ENCODE measurements at regions of chr14 and their contacts with region 1.

Region 1: GRCh38 chr14:50860478-50861086 is 11.3 kb upstream of the ABHD12B start:
- DNase-seq: peak; percentile 72 to 93 (median 87)
- ATAC-seq: peak; percentile 68 to 80 (median 78)
- H3K4me3 ChIP-seq: peak overlapping the region; percentile 55 to 70
- H3K4me3 Mint-ChIP-seq: peak overlapping the region; percentile 87 to 93 (median 93)
- H3K27ac ChIP-seq: no peak overlapping the region
- H3K27ac Mint-ChIP-seq: peak overlapping the region; percentile 84 to 91
- H3K4me1 ChIP-seq: peaks cover 4 to 8% of the 10 kb centered on the region in 2 experiments
- H3K4me1 Mint-ChIP-seq: peaks cover 8 to 16% (median 15%) of the 10 kb centered on the region in 3 donors
- H3K27me3 ChIP-seq: no peaks in the 10 kb centered on the region
- H3K27me3 Mint-ChIP-seq: peaks cover 0 to 3% of the 10 kb centered on the region in 2 donors

Region 2: DNA sequence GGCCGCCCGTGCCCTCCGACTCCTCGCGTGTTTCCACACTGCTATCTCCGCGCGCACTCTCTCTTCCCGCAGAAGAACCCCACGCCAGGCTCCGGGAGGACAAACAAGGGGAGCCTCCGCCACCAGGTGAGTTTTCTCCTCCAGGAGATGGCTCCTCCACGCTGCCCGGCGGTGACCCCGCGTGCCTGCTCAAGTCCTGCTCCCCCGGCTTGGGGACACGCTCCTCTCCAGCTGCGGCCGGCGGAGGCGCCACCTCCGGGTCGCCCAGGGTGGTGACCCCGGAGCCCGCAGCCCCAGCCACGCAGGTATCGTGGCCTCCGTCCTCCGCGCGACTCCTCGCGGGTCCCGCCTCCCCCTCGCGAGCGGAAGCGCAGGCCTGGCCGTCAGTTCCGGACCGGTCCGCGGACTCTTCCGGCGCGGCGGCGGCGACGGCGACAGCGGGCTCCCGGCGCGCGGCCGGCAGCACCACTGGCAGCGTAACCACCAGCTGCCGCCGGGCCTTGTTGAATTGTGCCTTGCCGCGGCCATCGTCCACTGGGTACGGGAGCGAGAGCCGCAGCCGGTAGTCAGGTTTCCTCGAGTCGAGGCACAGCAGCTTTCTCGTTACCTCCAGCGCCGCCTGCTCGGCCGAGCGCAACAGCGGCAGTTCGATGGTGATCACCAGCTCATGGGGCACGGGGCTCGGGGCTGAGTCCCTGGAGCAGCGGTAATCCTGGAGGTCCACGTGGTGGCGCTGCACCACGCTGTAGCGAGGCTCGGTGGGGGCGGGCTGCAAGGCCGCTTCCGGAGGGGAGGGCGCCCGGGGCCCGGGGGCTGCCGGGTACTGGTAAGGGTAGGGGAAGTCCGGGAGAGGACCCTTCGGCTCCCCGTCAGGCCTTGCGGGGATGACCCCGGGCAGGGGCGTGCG is 1226.7 kb before region 1 on chr14:
- CTCF ChIA-PET with region 1: interaction called, 3 to 15 read pairs
- POLR2A ChIA-PET with region 1: no interaction called
- DNase-seq: peak; percentile 83 to 96 (median 91)
- ATAC-seq: peak; percentile 84 to 88 (median 85)
- H3K4me3 ChIP-seq: peak overlapping the region; percentile 92 to 96
- H3K4me3 Mint-ChIP-seq: peak overlapping the region; percentile 95 to 99 (median 97)
- H3K27ac ChIP-seq: peak overlapping the region; percentile 98
- H3K27ac Mint-ChIP-seq: peak overlapping the region; percentile 92 to 94
- H3K4me1 ChIP-seq: peaks cover 4 to 41% of the 10 kb centered on the region in 2 experiments
- H3K4me1 Mint-ChIP-seq: peaks cover 48 to 68% (median 63%) of the 10 kb centered on the region in 3 donors
- H3K27me3 ChIP-seq: no peaks in the 10 kb centered on the region
- H3K27me3 Mint-ChIP-seq: no peaks in the 10 kb centered on the region

Region 3: DNA sequence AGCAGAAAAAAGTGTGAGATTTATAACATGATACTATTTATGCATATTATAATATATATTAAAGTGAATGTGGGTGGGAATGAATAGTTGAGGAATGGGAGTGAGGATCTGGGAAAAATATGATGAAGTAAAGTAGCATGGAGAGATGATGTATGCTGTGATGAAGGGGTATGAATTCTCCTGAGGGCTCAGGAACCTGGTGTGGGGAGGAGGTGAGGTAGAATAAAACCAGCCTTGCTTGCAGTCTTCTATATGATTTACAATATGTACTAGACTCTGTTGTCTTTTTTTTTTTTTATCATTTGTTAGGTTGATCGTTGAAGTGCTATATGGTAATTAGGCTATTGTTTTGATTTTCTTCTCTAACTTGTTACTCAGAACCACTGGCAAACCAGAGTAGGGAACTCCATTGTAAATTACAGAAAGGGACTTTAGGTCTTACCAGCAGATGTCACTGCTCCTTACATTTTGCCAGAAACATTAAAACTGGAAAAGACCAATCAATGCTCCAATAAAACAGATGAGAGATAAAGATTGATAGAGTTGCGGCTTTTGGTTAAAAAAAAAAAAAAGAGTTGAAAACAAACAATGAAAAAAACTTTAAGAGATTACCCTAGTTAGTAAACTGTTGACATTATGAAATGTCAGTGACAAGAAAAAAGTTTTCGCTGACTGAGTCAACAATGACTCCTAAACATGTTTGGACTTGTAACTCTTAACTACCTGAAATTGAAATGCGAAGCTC is 260.7 kb before region 1 on chr14:
- CTCF ChIA-PET with region 1: interaction called in 1 of 2 experiments, 17 read pairs
- POLR2A ChIA-PET with region 1: no interaction called
- DNase-seq: peak in 1 of 35 experiments; percentile 49
- ATAC-seq: no peak
- H3K4me3 ChIP-seq: no peak overlapping the region
- H3K4me3 Mint-ChIP-seq: no peak overlapping the region
- H3K27ac ChIP-seq: no peak overlapping the region
- H3K27ac Mint-ChIP-seq: no peak overlapping the region
- H3K4me1 ChIP-seq: no peaks in the 10 kb centered on the region
- H3K4me1 Mint-ChIP-seq: no peaks in the 10 kb centered on the region
- H3K27me3 ChIP-seq: no peaks in the 10 kb centered on the region
- H3K27me3 Mint-ChIP-seq: no peaks in the 10 kb centered on the region

Region 4: DNA sequence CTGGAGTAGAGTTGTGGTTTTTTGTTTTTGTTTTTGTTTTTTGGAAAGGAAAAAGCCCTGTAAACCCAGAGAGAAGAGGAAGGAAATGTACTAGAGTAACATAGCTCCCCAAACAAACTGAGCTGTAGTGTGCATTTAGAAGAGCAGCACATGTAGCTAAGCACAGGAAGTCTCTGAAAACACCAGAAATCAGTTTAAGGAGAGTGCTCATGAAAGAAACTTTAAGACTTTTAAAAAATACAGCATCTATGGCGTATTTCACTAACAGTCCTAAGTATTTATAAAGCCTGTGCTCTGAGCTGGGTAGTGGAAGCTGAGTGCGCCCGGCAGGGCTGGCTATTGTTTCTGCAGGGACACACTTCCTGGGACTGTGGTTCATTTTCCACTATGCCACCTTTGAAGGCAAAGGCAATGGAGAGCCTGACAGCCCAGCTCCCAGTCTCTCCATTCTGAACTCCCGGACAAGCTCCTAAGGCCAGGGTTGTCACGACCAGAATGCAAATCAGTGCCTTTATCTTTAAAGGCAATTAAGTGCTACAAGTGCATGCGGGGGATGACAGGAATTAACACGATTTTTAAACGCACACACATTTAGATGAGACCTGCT is 75.0 kb before region 1 on chr14:
- CTCF ChIA-PET with region 1: interaction called, 14 to 57 read pairs
- POLR2A ChIA-PET with region 1: interaction called in 1 of 2 experiments, 4 read pairs
- DNase-seq: peak in 2 of 35 experiments; percentile 17 to 48
- ATAC-seq: peak; percentile 64 to 83 (median 76)
- H3K4me3 ChIP-seq: peak overlapping the region in 1 of 2 donors; percentile 50
- H3K4me3 Mint-ChIP-seq: peak overlapping the region; percentile 13 to 70 (median 51)
- H3K27ac ChIP-seq: peak overlapping the region; percentile 78
- H3K27ac Mint-ChIP-seq: peak overlapping the region; percentile 97 to 98
- H3K4me1 ChIP-seq: peaks cover 59 to 61% of the 10 kb centered on the region in 2 experiments
- H3K4me1 Mint-ChIP-seq: peaks cover 87 to 92% (median 87%) of the 10 kb centered on the region in 3 donors
- H3K27me3 ChIP-seq: no peaks in the 10 kb centered on the region
- H3K27me3 Mint-ChIP-seq: no peaks in the 10 kb centered on the region

Region 5: DNA sequence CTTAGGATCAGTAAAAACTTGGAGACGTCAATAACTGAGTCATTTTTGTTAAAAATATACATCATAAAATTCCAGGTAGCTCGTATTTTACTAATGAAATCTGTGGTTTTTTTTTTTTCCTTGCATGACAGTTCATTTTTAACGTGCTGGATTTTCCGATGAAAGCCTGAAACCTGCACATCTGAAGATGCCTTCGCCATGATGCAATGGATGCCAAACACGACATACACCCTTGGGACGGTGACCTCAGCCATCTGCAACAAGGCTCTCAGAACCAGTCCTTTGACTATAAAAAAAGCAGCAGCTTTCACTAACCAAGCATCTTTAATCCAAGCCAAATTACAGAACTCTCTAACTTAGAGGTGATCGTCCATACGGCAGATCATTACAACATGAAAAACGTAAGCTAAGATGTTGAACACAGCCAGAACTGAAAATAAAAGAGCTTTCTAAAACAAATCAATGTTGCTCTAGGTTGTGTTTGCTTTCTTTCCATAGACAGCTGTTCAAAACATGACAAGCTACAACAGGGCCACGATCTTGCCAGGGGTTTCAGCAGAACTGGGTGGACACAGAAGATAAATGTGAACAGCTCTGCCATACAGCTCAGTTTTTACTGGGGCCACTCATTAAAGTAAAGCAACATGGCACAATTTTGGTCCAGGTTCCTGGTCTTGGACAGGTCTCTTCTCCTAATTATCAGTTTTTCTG is 37.4 kb before region 1 on chr14:
- CTCF ChIA-PET with region 1: interaction called, 9 to 38 read pairs
- POLR2A ChIA-PET with region 1: interaction called, 4 read pairs
- DNase-seq: peak in 1 of 35 experiments; percentile 26
- ATAC-seq: peak in 1 of 4 experiments; percentile 21
- H3K4me3 ChIP-seq: peak overlapping the region in 1 of 2 donors; percentile 32
- H3K4me3 Mint-ChIP-seq: peak overlapping the region; percentile 68 to 85 (median 70)
- H3K27ac ChIP-seq: peak overlapping the region; percentile 76
- H3K27ac Mint-ChIP-seq: peak overlapping the region; percentile 96 to 97
- H3K4me1 ChIP-seq: peaks cover 62 to 70% of the 10 kb centered on the region in 2 experiments
- H3K4me1 Mint-ChIP-seq: peaks cover 80 to 94% (median 92%) of the 10 kb centered on the region in 3 donors
- H3K27me3 ChIP-seq: no peaks in the 10 kb centered on the region
- H3K27me3 Mint-ChIP-seq: no peaks in the 10 kb centered on the region

Region 6: GRCh38 chr14:50875359-50876070 is 14.9 kb after region 1 on chr14:
- CTCF ChIA-PET with region 1: interaction called, 6 to 12 read pairs
- POLR2A ChIA-PET with region 1: interaction called, 3 to 9 read pairs
- DNase-seq: peak in 32 of 35 experiments; percentile 19 to 67 (median 33)
- ATAC-seq: peak; percentile 86 to 97 (median 90)
- H3K4me3 ChIP-seq: no peak overlapping the region
- H3K4me3 Mint-ChIP-seq: peak overlapping the region in 2 of 3 donors; percentile 52 to 63
- H3K27ac ChIP-seq: no peak overlapping the region
- H3K27ac Mint-ChIP-seq: no peak overlapping the region
- H3K4me1 ChIP-seq: peaks cover 11 to 23% of the 10 kb centered on the region in 2 experiments
- H3K4me1 Mint-ChIP-seq: peaks cover 34 to 45% (median 43%) of the 10 kb centered on the region in 3 donors
- H3K27me3 ChIP-seq: peaks cover 4 to 23% of the 10 kb centered on the region in 2 experiments
- H3K27me3 Mint-ChIP-seq: peaks cover 36 to 39% of the 10 kb centered on the region in 2 donors